ENCODE measurements at regions of chr10 and their contacts with region 1.

Region 1: GRCh38 chr10:31808258-31809218 is 120.1 kb downstream of the ARHGAP12 start:
- DNase-seq: peak; percentile 81
- H3K4me3 ChIP-seq: no peak overlapping the region
- H3K27ac ChIP-seq: peak overlapping the region; percentile 69
- H3K4me1 ChIP-seq: peaks cover 4% of the 10 kb centered on the region
- H3K27me3 ChIP-seq: no peaks in the 10 kb centered on the region
- CTCF ChIP-seq: peak; percentile 10 to 27
- POLR2A ChIP-seq: no peak

Region 2: GRCh38 chr10:30639946-30640786 is 1168.4 kb before region 1 on chr10:
- CTCF ChIA-PET with region 1: interaction called, 4 read pairs
- POLR2A ChIA-PET with region 1: no interaction called
- dilution Hi-C with region 1: no loop called
- intact Hi-C with region 1: loop called (anchors 1 kb)
- DNase-seq: peak; percentile 86
- H3K4me3 ChIP-seq: no peak overlapping the region
- H3K27ac ChIP-seq: peak overlapping the region; percentile 44
- H3K4me1 ChIP-seq: peaks cover 61% of the 10 kb centered on the region
- H3K27me3 ChIP-seq: peaks cover 0 to 1% of the 10 kb centered on the region in 2 experiments
- CTCF ChIP-seq: peak; percentile 64 to 70
- POLR2A ChIP-seq: no peak

Region 3: DNA sequence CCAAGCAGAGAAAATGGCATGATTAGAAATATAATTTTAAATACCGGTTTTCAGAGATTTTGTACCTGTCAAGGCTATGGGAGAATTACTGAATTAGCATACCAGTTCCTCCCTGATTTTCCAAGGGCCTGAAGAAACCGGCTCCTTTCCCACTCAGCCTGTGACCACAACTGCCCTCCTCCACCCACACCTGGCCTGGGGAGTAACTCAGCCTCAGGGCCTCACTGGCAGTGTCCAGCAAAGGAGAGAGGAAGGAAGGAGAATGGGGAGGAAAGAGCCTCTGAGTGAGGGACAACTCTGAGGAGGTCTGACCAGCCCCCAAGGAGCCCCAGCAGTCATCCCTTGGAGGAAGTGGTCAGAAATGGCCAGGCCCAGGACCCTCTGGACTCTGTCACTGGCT is 1081.0 kb before region 1 on chr10:
- CTCF ChIA-PET with region 1: interaction called, 4 read pairs
- POLR2A ChIA-PET with region 1: no interaction called
- dilution Hi-C with region 1: no loop called
- intact Hi-C with region 1: loop called (anchors 1 kb)
- DNase-seq: no peak
- H3K4me3 ChIP-seq: no peak overlapping the region
- H3K27ac ChIP-seq: no peak overlapping the region
- H3K4me1 ChIP-seq: no peaks in the 10 kb centered on the region
- H3K27me3 ChIP-seq: no peaks in the 10 kb centered on the region
- CTCF ChIP-seq: no peak
- POLR2A ChIP-seq: no peak

Region 4: GRCh38 chr10:31490858-31491504 is 317.6 kb before region 1 on chr10:
- CTCF ChIA-PET with region 1: interaction called, 4 read pairs
- POLR2A ChIA-PET with region 1: no interaction called
- dilution Hi-C with region 1: no loop called
- intact Hi-C with region 1: loop called (anchors 5 kb)
- DNase-seq: peak; percentile 63
- H3K4me3 ChIP-seq: no peak overlapping the region
- H3K27ac ChIP-seq: peak overlapping the region; percentile 7
- H3K4me1 ChIP-seq: peaks cover 13% of the 10 kb centered on the region
- H3K27me3 ChIP-seq: no peaks in the 10 kb centered on the region
- CTCF ChIP-seq: peak; percentile 50 to 53
- POLR2A ChIP-seq: no peak

Region 5: GRCh38 chr10:31707093-31708039 is 101.2 kb before region 1 on chr10:
- CTCF ChIA-PET with region 1: interaction called, 33 read pairs
- POLR2A ChIA-PET with region 1: interaction called, 3 read pairs
- dilution Hi-C with region 1: no loop called
- intact Hi-C with region 1: loop called (anchors 1 kb)
- DNase-seq: peak; percentile 96
- H3K4me3 ChIP-seq: peak overlapping the region in 1 of 3 experiments; percentile 16
- H3K27ac ChIP-seq: peak overlapping the region; percentile 98
- H3K4me1 ChIP-seq: peaks cover 45% of the 10 kb centered on the region
- H3K27me3 ChIP-seq: no peaks in the 10 kb centered on the region
- CTCF ChIP-seq: no peak
- POLR2A ChIP-seq: no peak

Region 6: DNA sequence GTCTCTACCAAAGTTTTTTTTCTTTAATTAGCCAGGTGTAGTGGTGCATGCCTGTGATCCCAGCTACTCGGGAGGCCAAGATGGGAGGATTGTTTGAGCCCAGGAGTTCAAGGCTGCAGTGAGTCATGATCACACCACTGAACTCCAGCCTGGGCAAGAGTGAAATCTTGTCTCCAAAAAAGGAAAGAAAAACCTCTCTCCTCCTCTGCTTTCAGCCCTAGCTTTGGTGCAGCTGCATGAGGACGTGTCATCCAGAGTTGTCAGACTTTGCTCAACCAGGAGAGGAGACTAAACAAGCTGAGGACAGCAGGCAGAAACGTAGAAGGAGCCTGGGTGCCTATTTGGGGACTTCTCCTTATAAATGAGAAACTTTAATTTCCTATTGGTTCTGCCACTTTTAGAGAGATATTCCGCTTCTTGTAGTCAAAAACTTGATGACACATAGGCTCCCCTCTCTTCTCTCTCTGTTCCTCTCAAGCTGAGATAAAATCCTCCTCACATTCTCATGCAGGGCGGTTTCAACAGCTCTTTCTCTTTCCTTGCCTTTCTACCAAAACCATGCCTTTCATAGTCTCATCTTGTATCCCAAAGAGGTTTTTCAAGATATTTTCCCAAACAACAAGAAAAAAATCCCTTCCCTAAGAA is 85.3 kb before region 1 on chr10:
- CTCF ChIA-PET with region 1: no interaction called
- POLR2A ChIA-PET with region 1: no interaction called
- dilution Hi-C with region 1: no loop called
- intact Hi-C with region 1: no loop called
- DNase-seq: no peak
- H3K4me3 ChIP-seq: no peak overlapping the region
- H3K27ac ChIP-seq: no peak overlapping the region
- H3K4me1 ChIP-seq: no peaks in the 10 kb centered on the region
- H3K27me3 ChIP-seq: peaks cover 0 to under 1% of the 10 kb centered on the region in 2 experiments
- CTCF ChIP-seq: no peak
- POLR2A ChIP-seq: no peak

Region 7: DNA sequence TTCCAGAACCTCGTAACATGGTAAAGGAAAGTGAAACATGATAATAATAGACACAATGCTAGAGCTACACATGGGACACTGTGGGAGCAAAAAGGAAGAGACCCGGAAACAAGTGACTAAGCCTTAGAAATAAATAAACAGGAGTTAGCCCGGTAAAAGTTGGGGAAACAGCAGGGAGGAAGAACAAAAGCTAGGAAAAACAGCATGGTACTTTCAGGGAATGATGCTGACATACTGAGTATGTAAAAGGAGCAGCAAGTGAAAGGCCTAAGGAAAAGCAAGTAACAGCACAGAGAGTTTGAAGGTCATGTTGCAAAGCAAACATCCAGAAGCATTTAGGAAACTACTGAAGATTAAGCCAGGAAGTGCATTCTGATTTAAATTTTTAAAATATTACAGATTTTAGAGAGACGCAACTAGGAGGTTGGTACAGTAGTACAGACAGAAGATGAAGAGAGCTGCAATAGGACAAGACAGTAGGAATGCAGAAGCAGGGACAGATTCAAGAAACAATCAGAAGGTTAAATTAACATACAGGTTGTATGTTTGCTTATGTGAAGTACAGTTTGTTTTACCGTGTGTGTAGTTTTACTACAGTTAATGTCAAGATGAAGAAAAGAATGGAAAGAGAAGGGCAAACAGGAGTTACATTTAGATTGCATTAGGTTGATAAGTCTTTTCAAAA is 56.4 kb after region 1 on chr10:
- CTCF ChIA-PET with region 1: no interaction called
- POLR2A ChIA-PET with region 1: no interaction called
- dilution Hi-C with region 1: no loop called
- intact Hi-C with region 1: no loop called
- DNase-seq: peak; percentile 85
- H3K4me3 ChIP-seq: peak overlapping the region in 1 of 3 experiments; percentile 60
- H3K27ac ChIP-seq: peak overlapping the region; percentile 29
- H3K4me1 ChIP-seq: peaks cover 22% of the 10 kb centered on the region
- H3K27me3 ChIP-seq: no peaks in the 10 kb centered on the region
- CTCF ChIP-seq: no peak
- POLR2A ChIP-seq: no peak